ENCODE measurements at regions of chr10 and their contacts with region 1.

Region 1: DNA sequence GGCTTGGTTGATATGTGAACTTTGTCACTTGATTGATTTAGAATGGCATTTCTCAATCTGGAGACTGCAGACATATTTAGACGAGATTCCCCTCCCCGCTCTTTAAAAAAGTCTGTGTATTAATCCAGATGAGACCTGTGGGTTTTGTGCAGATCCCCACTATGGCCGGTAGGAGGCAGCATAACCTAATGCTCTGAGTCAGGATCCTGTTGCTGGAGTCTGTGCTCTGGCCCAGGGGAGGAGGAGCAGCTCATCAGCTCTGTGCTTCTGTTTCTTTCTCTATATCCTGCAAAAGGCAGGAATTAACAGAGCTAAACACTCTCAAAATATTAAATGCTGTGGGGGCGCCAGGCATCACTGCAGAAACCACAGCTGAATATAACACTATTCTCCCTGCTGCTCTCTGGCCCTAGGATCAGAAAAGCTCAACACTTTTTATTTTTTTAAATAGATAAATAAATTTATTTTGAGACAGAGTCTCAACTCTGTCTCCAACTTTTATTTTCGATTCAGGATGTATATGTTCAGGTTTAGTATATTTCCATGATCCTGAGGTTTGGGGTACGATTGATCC is 23.9 kb upstream of the SEPHS1 start:
- DNase-seq: peak; percentile 59
- ATAC-seq: peak; percentile 97 to 98
- H3K4me3 ChIP-seq: no peak overlapping the region
- H3K27ac ChIP-seq: no peak overlapping the region
- H3K4me1 ChIP-seq: no peaks in the 10 kb centered on the region
- H3K27me3 ChIP-seq: no peaks in the 10 kb centered on the region
- CTCF ChIP-seq: peak; percentile 92

Region 2: DNA sequence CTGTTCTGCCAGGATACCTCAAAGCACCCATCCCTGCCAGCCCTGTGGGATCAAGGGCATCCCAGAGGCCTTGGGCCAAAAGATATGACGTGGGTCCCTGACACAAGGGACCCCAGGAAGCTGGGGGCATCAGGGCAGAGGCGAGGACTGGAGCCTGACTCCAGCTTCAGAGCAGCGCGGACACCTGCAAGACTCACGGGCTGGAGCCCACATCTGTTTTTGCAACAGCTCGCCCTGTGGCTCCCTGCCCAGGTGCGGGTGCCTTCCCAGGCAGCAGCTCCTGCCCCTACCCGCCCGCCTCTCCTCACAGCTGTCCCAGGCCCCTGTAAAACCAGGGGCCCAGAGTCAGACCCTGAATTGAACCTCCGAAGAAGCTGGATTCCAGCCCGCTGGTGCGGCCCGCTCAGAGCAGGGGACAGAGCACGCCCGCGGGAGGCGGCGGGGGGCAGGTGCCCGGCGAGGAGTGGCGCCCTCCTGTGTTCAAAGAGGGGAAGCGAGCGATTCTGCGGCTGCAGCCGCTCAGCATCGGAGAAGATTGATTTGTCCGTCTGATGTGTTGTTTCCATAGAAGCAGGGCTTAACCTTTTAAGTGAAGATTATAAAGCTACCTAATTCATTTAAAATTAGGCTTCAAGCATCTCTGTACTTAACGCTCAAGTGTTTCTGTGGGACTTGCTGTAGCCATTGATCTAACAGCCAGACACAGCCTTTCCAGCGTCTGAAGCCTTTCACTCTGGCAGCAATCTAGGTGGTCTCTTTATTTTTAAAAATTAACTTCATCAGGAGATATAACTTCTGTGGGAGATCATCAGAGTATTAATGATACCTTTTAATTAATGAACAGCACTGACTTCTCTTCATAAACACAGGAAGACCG is 68.4 kb after region 1 on chr10:
- intact Hi-C with region 1: loop called (anchors 5 kb)
- DNase-seq: peak; percentile 73
- ATAC-seq: peak; percentile 94
- H3K4me3 ChIP-seq: peak overlapping the region; percentile 40
- H3K27ac ChIP-seq: no peak overlapping the region
- H3K4me1 ChIP-seq: peaks cover 14% of the 10 kb centered on the region
- H3K27me3 ChIP-seq: peaks cover 22% of the 10 kb centered on the region
- CTCF ChIP-seq: peak; percentile 89

Region 3: DNA sequence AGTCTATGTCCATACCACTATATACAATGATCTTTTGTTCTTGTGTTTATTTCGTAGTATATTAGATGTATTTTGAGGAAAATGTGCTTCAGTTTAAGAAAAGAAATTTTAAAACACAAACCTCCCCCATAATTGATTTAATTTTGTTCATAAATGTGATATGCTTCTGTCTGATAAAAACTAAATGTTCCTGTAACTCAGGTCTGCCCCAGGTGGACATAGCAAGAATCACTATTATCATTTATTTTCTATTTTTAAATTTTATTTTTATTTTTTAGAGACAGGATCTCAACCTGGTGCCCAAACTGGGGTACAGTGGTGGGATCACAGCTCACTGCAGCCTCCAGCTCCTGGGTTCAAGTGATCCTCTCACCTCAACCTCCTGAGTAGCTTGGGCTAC is 113.6 kb after region 1 on chr10:
- intact Hi-C with region 1: no loop called
- DNase-seq: no peak
- ATAC-seq: no peak
- H3K4me3 ChIP-seq: no peak overlapping the region
- H3K27ac ChIP-seq: no peak overlapping the region
- H3K4me1 ChIP-seq: no peaks in the 10 kb centered on the region
- H3K27me3 ChIP-seq: no peaks in the 10 kb centered on the region
- CTCF ChIP-seq: no peak

Measured in lower lobe of right lung (tissue), 2 donors.